ENCODE measurements at regions of chr14 and their contacts with region 1.

Region 1: DNA sequence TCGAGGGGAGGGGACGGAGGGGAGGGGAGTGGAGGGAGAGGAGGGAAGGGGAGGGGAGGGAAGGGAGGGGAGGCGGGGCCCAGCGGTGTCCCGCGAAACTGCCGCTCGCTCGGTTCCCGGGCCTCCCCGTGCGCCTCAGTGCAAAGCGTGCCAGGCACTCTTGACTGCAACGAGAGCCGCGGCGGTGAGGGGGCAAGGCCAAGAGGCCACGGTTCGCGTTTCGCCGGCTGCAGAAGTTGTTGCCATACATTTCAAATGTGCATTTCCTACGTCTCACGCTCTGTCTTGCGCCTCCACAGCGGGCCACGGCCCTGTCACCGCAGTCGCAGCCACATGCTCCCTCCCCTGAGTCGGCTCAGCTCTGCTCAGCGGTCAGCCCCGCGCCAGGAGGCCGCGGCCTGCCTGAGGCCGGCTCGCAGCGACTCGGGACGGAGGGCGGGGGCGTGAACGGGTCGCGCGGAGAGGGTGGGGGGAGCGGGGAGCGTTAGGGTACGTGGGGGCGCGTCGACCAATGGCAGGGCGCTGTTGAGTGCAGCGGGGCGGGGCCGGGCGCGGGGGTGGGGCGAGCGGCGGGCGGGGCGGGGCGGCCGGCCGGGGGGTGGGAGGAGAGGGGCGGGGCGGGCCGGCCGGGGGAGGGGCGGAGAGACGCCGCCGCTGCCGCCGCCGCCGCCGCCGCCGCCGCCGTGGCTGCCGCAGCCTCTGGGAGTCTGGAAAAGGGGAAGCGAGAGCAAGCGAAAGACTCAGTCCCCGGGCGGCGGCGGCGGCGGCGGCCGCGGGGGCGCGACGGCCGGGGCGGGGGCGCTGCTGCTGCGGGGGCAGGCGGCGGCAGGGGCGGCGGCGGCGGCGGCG is at the start of gene PPP2R5C:
- DNase-seq: peak; percentile 72
- H3K4me3 Mint-ChIP-seq: peak within 1 kb of the TSS; percentile 90
- H3K27ac Mint-ChIP-seq: peak within 1 kb of the TSS; percentile 79
- H3K4me1 Mint-ChIP-seq: peaks cover 33% of the 10 kb centered on the region
- H3K27me3 Mint-ChIP-seq: peaks cover 3% of the 10 kb centered on the region
- total RNA-seq, gene PPP2R5C: 157 and 166 TPM in 2 replicates

Region 2: DNA sequence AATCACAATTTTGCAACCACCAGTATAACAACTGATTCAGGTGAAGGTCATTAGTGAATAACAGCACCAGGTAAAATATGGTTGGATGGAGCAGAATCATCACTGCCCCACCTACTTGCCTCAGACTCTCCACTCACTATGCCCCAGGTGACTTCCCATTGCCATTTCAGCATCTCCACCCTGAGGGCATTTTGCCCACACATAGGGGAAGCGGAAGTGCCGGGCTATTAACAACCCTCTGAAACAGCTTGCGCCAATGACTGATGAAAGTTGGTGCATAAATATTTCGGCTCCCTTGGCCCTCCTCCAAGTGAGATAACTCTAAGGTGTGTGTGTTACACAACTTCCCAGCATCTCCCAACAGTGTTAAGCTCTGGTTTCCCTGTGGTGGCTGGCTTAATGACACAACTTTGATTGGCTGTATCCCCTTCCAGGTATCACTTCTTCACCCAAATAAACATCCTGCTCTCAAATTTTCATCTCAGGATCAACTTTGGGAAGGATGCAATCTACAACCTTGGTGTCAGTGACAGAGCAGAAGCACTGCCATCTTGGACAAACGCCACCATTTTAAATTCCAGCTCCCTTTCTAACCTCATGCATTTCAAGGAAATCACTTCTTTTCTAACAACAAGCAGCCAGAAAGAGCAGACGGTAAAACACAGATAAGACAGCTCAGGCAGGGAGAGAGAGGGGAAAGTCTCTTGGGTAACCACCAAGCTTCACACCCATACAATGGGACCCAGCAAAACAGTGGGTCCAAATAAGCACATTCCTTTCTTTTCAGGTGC is 73.3 kb before region 1 on chr14:
- intact Hi-C with region 1: no loop called
- DNase-seq: no peak
- H3K4me3 Mint-ChIP-seq: no peak overlapping the region
- H3K27ac Mint-ChIP-seq: no peak overlapping the region
- H3K4me1 Mint-ChIP-seq: no peaks in the 10 kb centered on the region
- H3K27me3 Mint-ChIP-seq: peaks cover 13% of the 10 kb centered on the region

Region 3: DNA sequence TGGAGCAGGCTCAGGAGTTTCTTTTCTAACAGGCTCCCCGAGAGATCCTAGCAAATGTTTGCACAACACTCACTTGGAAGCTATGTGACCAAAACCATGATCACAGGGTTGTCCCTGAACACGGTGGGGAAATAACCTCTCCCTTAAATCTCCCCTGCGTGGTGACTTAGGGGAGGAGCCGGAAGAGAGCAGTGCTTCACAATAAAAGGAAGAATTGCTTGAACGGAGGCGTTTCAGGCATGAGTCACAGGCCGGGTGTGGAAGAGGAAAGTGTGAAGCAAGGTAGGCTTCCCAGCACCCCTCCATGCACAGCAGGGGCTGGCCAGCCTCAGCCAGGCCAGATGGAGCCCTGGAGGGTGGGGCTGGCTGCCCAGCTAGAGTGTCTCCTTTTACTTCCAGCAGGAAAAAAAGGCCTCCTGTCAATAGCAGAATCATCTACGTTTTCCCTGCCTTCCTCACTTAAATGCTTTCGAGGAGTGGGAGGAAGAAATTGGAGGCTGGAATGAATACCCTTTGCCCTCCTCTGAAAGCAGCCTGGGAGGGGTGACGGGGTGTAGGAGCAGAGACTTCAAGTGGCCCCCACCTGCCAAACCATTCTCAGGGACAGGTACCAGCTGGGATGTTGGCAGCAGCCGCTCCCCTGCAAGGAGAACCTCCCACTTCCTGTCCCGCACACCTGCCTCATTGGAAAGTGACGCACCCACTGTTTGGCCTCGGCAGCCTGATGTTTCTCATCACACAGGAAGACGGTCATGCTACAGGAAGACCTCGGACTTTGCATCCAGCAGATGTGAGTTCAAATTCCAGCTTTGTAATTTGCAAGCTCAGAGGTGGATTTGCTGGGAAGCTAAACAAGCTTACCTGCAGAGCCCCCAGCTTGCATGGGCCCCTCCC is 29.8 kb before region 1 on chr14:
- intact Hi-C with region 1: loop called (anchors 1 kb)
- DNase-seq: peak; percentile 79
- H3K4me3 Mint-ChIP-seq: peak overlapping the region; percentile 51
- H3K27ac Mint-ChIP-seq: peak overlapping the region; percentile 82
- H3K4me1 Mint-ChIP-seq: peaks cover 59% of the 10 kb centered on the region
- H3K27me3 Mint-ChIP-seq: no peaks in the 10 kb centered on the region

Region 4: DNA sequence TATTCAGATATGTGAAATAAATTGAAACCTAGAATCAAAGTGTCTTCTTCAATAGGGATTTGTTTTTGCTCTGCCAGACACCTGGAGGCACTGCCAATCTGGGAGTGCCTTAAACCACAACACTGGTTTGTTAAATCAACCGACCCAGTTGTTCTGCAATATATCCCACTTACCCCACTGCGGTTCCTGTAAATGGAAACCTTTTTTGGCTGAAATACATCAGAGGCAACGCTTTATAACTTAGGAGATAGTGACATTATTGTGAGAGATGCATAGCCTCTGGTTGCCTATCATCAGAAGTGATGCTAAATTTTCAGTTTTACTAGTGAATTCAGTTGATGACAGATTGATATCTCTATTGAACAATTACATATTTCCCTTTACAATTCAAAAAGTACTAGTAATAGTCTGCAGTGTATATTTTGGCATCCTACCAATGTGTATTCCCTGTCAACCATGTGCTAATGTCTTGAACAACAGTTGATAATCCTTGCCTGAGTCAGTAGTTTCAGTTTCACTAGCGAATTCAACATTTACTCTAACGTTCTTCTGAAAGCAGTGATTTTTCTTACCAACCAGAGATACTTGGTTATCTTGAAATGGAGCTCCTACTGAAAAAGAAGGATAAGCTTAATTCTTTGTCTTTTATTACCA is 30.8 kb after region 1 on chr14:
- intact Hi-C with region 1: no loop called
- DNase-seq: no peak
- H3K4me3 Mint-ChIP-seq: peak overlapping the region; percentile 52
- H3K27ac Mint-ChIP-seq: peak overlapping the region; percentile 71
- H3K4me1 Mint-ChIP-seq: peaks cover 20% of the 10 kb centered on the region
- H3K27me3 Mint-ChIP-seq: no peaks in the 10 kb centered on the region